ENCODE measurements at regions of chr15 and their contacts with region 1.

Region 1: DNA sequence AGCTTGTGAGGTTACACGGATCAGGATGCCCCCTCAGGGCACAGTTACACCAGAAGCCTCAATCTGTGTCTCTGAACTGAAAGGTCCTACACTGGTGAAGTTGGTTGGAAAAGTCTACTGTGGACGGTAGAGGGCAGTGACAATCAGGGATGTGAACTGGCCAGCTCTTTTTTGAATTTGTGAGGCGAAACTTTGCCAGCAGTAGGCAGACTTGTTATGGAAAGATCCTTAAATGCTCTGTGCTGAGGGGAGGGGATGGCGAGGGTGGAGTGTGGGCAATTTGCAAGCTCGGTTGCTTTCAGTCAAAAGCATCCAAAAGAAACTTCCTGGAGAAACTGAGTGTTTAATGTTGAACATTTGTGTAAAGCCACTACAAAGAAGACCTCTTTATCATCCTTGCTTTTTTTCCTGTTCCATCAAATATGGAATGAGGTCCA is 127.4 kb upstream of the ABHD17C start:
- DNase-seq: peak; percentile 80
- H3K4me3 ChIP-seq: no peak overlapping the region; a peak in 1 of 4 replicates
- H3K27ac ChIP-seq: 0 out of 4 replicates have a peak overlapping the region, but pooled peaks of 1 of the 2 experiments have one; percentile 7
- H3K4me1 ChIP-seq: peaks cover 0 to 4% of the 10 kb centered on the region in 2 experiments; a peak in 1 of 4 replicates
- H3K27me3 ChIP-seq: no peaks in the 10 kb centered on the region
- CTCF ChIP-seq: peak; percentile 87
- EP300 ChIP-seq: no peak
- RAD21 ChIP-seq: peak; percentile 97

Region 2: DNA sequence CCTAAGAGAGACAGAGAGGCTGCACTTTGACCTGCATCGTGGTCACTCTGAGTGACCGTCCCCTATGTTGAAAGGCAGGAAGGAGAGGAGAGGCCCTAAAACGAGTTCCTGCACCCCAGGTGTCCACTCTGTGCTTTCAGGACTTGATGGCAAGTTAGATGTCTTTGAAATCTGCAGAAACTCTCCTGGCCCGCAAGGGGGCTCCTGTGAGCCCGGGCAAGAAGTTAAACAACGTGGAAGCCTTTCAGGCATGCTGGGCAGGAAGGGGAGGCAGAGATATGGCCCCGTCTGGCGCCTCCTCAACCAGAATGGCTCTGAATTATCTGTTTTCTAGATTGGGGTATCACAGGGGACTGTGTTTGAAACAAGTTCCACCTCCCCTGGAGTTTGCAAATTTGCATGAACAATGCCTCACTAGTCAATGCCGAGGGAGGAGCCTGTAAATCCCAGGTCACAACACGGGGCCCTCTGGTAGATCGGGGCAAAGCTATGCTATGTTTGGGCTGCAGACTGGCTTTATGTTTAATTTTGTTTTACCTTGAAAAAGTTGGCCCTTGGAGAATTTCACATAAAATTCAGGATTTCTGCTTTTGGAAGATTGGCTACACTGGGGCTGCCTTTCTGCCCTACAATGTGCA is 325.5 kb before region 1 on chr15:
- CTCF ChIA-PET with region 1: no interaction called
- POLR2A ChIA-PET with region 1: no interaction called
- DNase-seq: peak; percentile 16
- H3K4me3 ChIP-seq: no peak overlapping the region; a peak in 1 of 4 replicates
- H3K27ac ChIP-seq: no peak overlapping the region
- H3K4me1 ChIP-seq: no peaks in the 10 kb centered on the region; a peak in 1 of 4 replicates
- H3K27me3 ChIP-seq: no peaks in the 10 kb centered on the region; the same call in 1 of the 2 replicates
- CTCF ChIP-seq: peak; percentile 57
- EP300 ChIP-seq: no peak
- RAD21 ChIP-seq: 0 out of 2 replicates have a peak, but pooled peaks have one; percentile 19

Region 3: GRCh38 chr15:80404057-80404715 is 163.6 kb before region 1 on chr15 and contains the start of gene ARNT2:
- CTCF ChIA-PET with region 1: no interaction called
- POLR2A ChIA-PET with region 1: no interaction called
- DNase-seq: peak; percentile 91
- H3K4me3 ChIP-seq: peak within 1 kb of the TSS; percentile 83 to 85
- H3K27ac ChIP-seq: peak within 1 kb of the TSS; percentile 39 to 87; a peak in 3 of 4 replicates
- H3K4me1 ChIP-seq: peaks cover 6 to 17% of the 10 kb centered on the region in 2 experiments; a peak in 2 of 4 replicates
- H3K27me3 ChIP-seq: no peaks in the 10 kb centered on the region
- CTCF ChIP-seq: no peak
- EP300 ChIP-seq: no peak
- RAD21 ChIP-seq: no peak
- polyA plus RNA-seq, gene ARNT2: 14.1 and 17.0 TPM in 2 replicates

Region 4: GRCh38 chr15:80550219-80550907 is 17.4 kb before region 1 on chr15:
- CTCF ChIA-PET with region 1: interaction called, 14 read pairs
- POLR2A ChIA-PET with region 1: no interaction called
- DNase-seq: no peak
- H3K4me3 ChIP-seq: peak overlapping the region; percentile 14 to 32; a peak in 3 of 4 replicates
- H3K27ac ChIP-seq: peak overlapping the region; percentile 93 to 95
- H3K4me1 ChIP-seq: peaks cover 13 to 16% of the 10 kb centered on the region in 2 experiments
- H3K27me3 ChIP-seq: no peaks in the 10 kb centered on the region
- CTCF ChIP-seq: no peak
- EP300 ChIP-seq: peak; percentile 25 to 96; a peak in 3 of 4 replicates
- RAD21 ChIP-seq: no peak

Region 5: GRCh38 chr15:80590481-80591235 is 22.9 kb after region 1 on chr15:
- CTCF ChIA-PET with region 1: interaction called, 11 read pairs
- POLR2A ChIA-PET with region 1: no interaction called
- DNase-seq: no peak
- H3K4me3 ChIP-seq: no peak overlapping the region
- H3K27ac ChIP-seq: no peak overlapping the region
- H3K4me1 ChIP-seq: peaks cover 0 to 6% of the 10 kb centered on the region in 2 experiments; a peak in 1 of 4 replicates
- H3K27me3 ChIP-seq: no peaks in the 10 kb centered on the region
- CTCF ChIP-seq: no peak
- EP300 ChIP-seq: no peak
- RAD21 ChIP-seq: no peak

Region 6: GRCh38 chr15:80761754-80762153 is 194.0 kb after region 1 on chr15:
- CTCF ChIA-PET with region 1: interaction called, 17 read pairs
- POLR2A ChIA-PET with region 1: interaction called, 5 read pairs
- DNase-seq: no peak
- H3K4me3 ChIP-seq: no peak overlapping the region
- H3K27ac ChIP-seq: no peak overlapping the region
- H3K4me1 ChIP-seq: no peaks in the 10 kb centered on the region
- H3K27me3 ChIP-seq: no peaks in the 10 kb centered on the region
- CTCF ChIP-seq: no peak
- EP300 ChIP-seq: no peak
- RAD21 ChIP-seq: no peak

Region 7: GRCh38 chr15:80789296-80789695 is 221.6 kb after region 1 on chr15:
- CTCF ChIA-PET with region 1: interaction called, 19 read pairs
- POLR2A ChIA-PET with region 1: no interaction called
- DNase-seq: no peak
- H3K4me3 ChIP-seq: no peak overlapping the region
- H3K27ac ChIP-seq: no peak overlapping the region
- H3K4me1 ChIP-seq: no peaks in the 10 kb centered on the region; a peak in 1 of 4 replicates
- H3K27me3 ChIP-seq: no peaks in the 10 kb centered on the region
- CTCF ChIP-seq: no peak
- EP300 ChIP-seq: no peak
- RAD21 ChIP-seq: no peak

Region 8: GRCh38 chr15:81023483-81024264 is 455.9 kb after region 1 on chr15:
- CTCF ChIA-PET with region 1: no interaction called
- POLR2A ChIA-PET with region 1: no interaction called
- DNase-seq: no peak
- H3K4me3 ChIP-seq: no peak overlapping the region
- H3K27ac ChIP-seq: no peak overlapping the region
- H3K4me1 ChIP-seq: no peaks in the 10 kb centered on the region
- H3K27me3 ChIP-seq: no peaks in the 10 kb centered on the region
- CTCF ChIP-seq: no peak
- EP300 ChIP-seq: no peak
- RAD21 ChIP-seq: no peak

Region 9: GRCh38 chr15:81170511-81170910 is 602.8 kb after region 1 on chr15:
- CTCF ChIA-PET with region 1: no interaction called
- POLR2A ChIA-PET with region 1: no interaction called
- DNase-seq: no peak
- H3K4me3 ChIP-seq: no peak overlapping the region
- H3K27ac ChIP-seq: no peak overlapping the region
- H3K4me1 ChIP-seq: no peaks in the 10 kb centered on the region
- H3K27me3 ChIP-seq: no peaks in the 10 kb centered on the region
- CTCF ChIP-seq: no peak
- EP300 ChIP-seq: no peak
- RAD21 ChIP-seq: no peak

Measured in SK-N-SH (cell line).